Naive thymus-derived CD4-positive, alpha-beta T cell (primary cell): ENCODE measurements at regions of chr6 and their contacts with region 1.

Region 1: DNA sequence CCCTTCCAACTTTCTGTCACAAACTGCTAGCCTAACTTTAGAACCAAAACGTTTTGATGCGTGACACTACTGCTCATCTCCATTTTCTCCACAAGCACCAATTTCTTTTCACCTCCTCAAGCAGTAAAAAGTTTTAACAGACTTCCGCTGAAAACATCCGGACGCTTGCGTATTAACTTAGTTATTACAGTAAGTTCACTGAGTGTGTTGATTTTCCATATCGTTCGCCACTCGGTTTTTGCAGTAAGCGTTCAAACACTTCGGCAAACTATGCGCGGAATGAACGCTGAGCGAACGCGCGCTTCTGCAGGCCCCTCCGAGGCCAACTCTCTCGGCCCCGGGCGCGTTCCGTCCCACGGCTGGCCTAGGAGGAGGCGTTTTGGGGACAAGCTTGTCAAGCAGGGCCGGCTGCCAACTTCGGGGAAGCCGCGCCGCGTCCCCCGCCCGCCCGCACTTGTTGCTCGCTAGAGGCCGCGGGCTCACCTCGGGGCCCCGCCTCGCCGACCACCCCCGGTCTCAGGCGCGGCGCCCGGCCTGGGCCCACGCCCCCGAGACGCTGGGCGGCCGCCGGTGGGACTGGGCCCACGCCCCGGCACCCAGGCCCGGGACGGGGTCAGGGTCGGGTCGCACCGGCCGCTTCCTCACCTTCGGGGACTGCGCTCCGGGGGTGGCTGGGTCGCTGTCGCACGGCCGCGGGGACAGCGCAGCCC is 945 bp downstream of the PHF10 start:
- DNase-seq: peak; percentile 59 to 86 (median 79)
- ATAC-seq: peak; percentile 49
- H3K4me3 ChIP-seq: peak overlapping the region; percentile 71
- H3K4me3 Mint-ChIP-seq: peak overlapping the region; percentile 87 to 97 (median 92)
- H3K27ac ChIP-seq: peak overlapping the region; percentile 95
- H3K27ac Mint-ChIP-seq: peak overlapping the region; percentile 95 to 98 (median 97)
- H3K4me1 ChIP-seq: peaks cover 13 to 26% of the 10 kb centered on the region in 2 donors
- H3K4me1 Mint-ChIP-seq: peaks cover 18 to 67% (median 55%) of the 10 kb centered on the region in 7 donors
- H3K27me3 ChIP-seq: no peaks in the 10 kb centered on the region
- H3K27me3 Mint-ChIP-seq: peaks cover 0 to 8% (median 0%) of the 10 kb centered on the region in 5 donors

Region 2: GRCh38 chr6:167826230-167826895 is 1897.0 kb before region 1 on chr6:
- CTCF ChIA-PET with region 1: no interaction called
- POLR2A ChIA-PET with region 1: no interaction called
- intact Hi-C with region 1: loop called in 1 of 2 experiments (anchors 5 kb)
- DNase-seq: peak; percentile 11 to 73 (median 55)
- ATAC-seq: peak; percentile 97
- H3K4me3 ChIP-seq: peak overlapping the region; percentile 66
- H3K4me3 Mint-ChIP-seq: peak overlapping the region; percentile 83 to 91 (median 85)
- H3K27ac ChIP-seq: no peak overlapping the region
- H3K27ac Mint-ChIP-seq: peak overlapping the region in 4 of 9 donors; percentile 44 to 69 (median 60)
- H3K4me1 ChIP-seq: peaks cover 0 to 14% of the 10 kb centered on the region in 2 donors
- H3K4me1 Mint-ChIP-seq: peaks cover 5 to 43% (median 26%) of the 10 kb centered on the region in 7 donors
- H3K27me3 ChIP-seq: peaks cover 0 to 27% of the 10 kb centered on the region in 2 donors
- H3K27me3 Mint-ChIP-seq: peaks cover 49 to 81% (median 69%) of the 10 kb centered on the region in 5 donors

Region 3: DNA sequence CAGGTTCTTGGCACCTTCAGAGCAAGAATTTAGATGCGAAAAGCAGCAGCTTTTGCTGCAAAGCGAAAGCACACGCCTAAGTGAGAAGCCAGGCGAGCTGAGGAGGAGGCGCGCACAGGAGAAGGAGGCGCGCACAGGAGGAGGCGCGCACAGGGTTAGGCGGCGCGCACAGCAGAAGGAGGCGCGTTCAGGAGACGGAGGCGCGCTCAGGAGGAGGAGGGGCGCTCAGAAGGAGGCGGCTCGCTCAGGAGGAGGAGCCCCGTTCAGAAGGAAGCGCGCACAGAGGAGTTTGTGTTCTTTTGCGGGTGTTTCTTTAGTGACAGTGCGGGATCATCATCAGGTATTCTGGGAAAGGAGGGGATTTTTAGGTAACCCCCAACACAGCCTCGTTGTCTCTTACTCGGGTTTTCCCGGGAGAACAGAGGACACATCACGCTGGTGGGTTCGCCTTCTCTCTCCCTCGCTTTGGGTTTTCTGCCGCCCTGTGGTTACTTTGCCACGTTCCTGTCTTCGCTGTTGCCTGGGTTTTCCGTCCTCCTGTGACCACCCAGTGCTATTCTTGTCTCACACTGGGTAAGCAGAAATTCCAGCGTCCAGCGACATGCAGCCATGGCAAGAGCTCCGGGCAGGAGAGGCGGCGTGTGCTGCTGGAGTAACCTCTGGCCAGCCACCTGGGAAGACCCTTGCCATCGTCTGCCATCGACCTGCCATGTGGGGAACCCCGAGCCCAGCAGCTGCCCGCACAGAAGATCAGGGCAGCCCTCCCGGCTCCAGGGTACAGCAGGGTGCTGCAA is 68.6 kb before region 1 on chr6:
- CTCF ChIA-PET with region 1: no interaction called
- POLR2A ChIA-PET with region 1: interaction called, 7 read pairs
- intact Hi-C with region 1: loop called (anchors 1 kb)
- DNase-seq: peak; percentile 59 to 86 (median 73)
- ATAC-seq: peak; percentile 99
- H3K4me3 ChIP-seq: peak overlapping the region; percentile 64
- H3K4me3 Mint-ChIP-seq: peak overlapping the region; percentile 86 to 95 (median 92)
- H3K27ac ChIP-seq: peak overlapping the region; percentile 72
- H3K27ac Mint-ChIP-seq: peak overlapping the region; percentile 71 to 95 (median 89)
- H3K4me1 ChIP-seq: no peaks in the 10 kb centered on the region
- H3K4me1 Mint-ChIP-seq: peaks cover 0 to 19% (median 15%) of the 10 kb centered on the region in 7 donors
- H3K27me3 ChIP-seq: no peaks in the 10 kb centered on the region
- H3K27me3 Mint-ChIP-seq: no peaks in the 10 kb centered on the region

Region 4: DNA sequence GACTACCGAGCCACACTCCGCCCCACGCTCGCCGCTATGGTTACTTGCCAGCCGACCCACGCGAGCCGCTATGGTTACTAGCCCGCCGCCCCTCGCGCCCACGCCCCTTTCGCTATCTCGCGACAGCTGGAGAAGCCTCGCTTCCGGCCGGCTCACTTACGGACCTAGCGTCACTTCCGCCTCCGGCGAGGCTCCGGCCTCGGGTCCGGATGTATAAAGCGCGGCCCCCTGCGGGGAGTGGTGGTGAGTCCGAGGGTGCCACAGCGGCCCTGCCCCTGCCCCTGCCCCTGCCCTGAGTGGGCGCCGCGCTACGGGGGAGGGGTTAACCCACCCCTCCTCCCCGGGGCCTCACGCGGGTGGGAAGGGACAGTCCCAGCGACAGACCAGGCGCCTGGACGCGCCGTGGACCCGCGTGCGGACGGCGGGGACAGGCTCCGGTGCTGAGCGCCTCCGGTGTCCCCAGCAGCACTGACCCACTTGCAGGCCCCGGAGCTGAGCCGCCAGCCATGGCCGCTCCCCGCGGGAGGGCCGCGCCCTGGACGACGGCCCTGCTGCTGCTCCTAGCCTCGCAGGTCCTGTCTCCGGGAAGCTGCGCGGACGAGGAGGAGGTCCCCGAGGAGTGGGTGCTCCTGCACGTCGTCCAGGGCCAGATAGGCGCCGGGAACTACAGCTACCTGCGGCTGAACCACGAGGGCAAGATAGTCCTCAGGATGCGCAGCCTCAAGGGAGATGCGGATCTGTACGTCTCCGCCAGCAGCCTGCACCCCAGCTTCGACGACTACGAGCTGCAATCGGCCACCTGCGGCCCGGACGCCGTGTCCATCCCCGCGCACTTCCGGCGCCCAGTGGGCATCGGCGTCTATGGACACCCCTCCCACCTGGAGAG is 21.2 kb before region 1 on chr6 and contains the starts of genes C6orf120 and WDR27:
- CTCF ChIA-PET with region 1: interaction called, 6 read pairs
- POLR2A ChIA-PET with region 1: interaction called, 307 read pairs
- intact Hi-C with region 1: loop called (anchors 1 kb)
- DNase-seq: peak; percentile 91 to 98 (median 94)
- ATAC-seq: peak; percentile 93
- H3K4me3 ChIP-seq: peak within 1 kb of the TSS; percentile 95
- H3K4me3 Mint-ChIP-seq: peak within 1 kb of the TSS; percentile 89 to 94 (median 92)
- H3K27ac ChIP-seq: peak within 1 kb of the TSS; percentile 98
- H3K27ac Mint-ChIP-seq: peak within 1 kb of the TSS; percentile 88 to 96 (median 93)
- H3K4me1 ChIP-seq: peaks cover 22 to 36% of the 10 kb centered on the region in 2 donors
- H3K4me1 Mint-ChIP-seq: peaks cover 28 to 66% (median 55%) of the 10 kb centered on the region in 7 donors
- H3K27me3 ChIP-seq: no peaks in the 10 kb centered on the region
- H3K27me3 Mint-ChIP-seq: no peaks in the 10 kb centered on the region
- total RNA-seq, gene C6orf120: 16.0 to 38.1 (median 19.3) TPM
- total RNA-seq, gene WDR27: 22.7 to 89.0 (median 41.4) TPM

Region 5: DNA sequence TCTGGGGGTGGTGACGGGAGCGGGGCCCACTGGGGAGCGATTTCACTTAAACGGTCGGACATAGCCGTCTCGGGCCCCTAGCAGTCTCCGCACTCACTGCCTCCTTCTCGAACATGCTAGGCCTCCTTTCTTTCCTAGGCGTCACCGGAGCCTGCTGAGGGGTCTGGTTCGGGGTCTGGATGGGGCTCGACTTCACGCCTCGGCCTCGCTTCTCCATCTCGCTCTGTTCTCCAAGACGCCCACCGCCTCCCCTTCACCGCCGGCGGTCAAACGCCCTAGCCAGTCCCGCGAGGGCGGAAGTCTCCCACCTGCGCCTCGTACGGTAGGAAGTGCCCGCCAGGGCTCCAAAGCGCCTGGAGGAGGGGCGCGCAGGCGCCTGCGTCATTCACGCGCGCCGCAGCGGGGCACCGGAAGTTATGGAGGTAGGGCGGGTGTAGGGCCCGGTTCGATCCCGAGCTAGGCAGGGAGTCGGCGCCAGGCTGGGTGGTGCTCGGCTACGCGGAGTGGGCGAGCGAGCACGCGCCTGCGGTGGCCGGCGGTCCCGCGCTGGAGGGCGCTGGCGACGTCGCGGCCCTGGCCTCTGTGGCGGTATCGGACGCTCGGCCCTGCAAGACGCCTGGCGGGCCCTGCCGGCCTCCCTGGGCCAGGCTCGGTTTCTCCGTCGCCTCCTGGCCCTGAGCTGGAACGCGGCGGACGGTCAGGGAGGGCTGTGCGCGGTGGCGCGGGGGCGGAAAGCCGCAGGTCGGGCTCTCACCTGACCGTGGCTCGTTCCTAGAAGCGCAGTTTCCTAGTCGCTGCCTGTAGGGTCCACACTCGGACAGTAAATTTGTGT is 28.1 kb after region 1 on chr6 and contains the starts of genes DYNLT2 and ERMARD:
- CTCF ChIA-PET with region 1: no interaction called
- POLR2A ChIA-PET with region 1: interaction called, 97 read pairs
- intact Hi-C with region 1: loop called (anchors 1 kb)
- DNase-seq: peak; percentile 89 to 97 (median 94)
- ATAC-seq: peak; percentile 98
- H3K4me3 ChIP-seq: peak within 1 kb of the TSS; percentile 84
- H3K4me3 Mint-ChIP-seq: peak within 1 kb of the TSS; percentile 92 to 100 (median 98)
- H3K27ac ChIP-seq: peak within 1 kb of the TSS; percentile 92
- H3K27ac Mint-ChIP-seq: peak within 1 kb of the TSS; percentile 96 to 100 (median 100)
- H3K4me1 ChIP-seq: peaks cover 17% of the 10 kb centered on the region in 2 donors
- H3K4me1 Mint-ChIP-seq: peaks cover 21 to 43% (median 37%) of the 10 kb centered on the region in 7 donors
- H3K27me3 ChIP-seq: no peaks in the 10 kb centered on the region
- H3K27me3 Mint-ChIP-seq: peaks cover 0 to 4% (median 0%) of the 10 kb centered on the region in 5 donors
- total RNA-seq, gene DYNLT2: 2.5 to 4.7 (median 4.1) TPM
- total RNA-seq, gene ERMARD: 30.3 to 43.7 (median 35.7) TPM

Region 6: GRCh38 chr6:170554013-170554795 is 830.8 kb after region 1 on chr6 and contains the start of gene TBP:
- CTCF ChIA-PET with region 1: interaction called, 3 read pairs
- POLR2A ChIA-PET with region 1: interaction called, 14 read pairs
- intact Hi-C with region 1: loop called (anchors 1 kb)
- DNase-seq: peak; percentile 90 to 99 (median 97)
- ATAC-seq: peak; percentile 95
- H3K4me3 ChIP-seq: peak within 1 kb of the TSS; percentile 91
- H3K4me3 Mint-ChIP-seq: no peak within 1 kb of the TSS
- H3K27ac ChIP-seq: peak within 1 kb of the TSS; percentile 93
- H3K27ac Mint-ChIP-seq: no peak within 1 kb of the TSS
- H3K4me1 ChIP-seq: peaks cover 38% of the 10 kb centered on the region in 2 donors
- H3K4me1 Mint-ChIP-seq: peaks cover 16 to 46% (median 30%) of the 10 kb centered on the region in 7 donors
- H3K27me3 ChIP-seq: no peaks in the 10 kb centered on the region
- H3K27me3 Mint-ChIP-seq: no peaks in the 10 kb centered on the region
- total RNA-seq, gene TBP: 13.8 to 28.3 (median 23.9) TPM

Region 7: DNA sequence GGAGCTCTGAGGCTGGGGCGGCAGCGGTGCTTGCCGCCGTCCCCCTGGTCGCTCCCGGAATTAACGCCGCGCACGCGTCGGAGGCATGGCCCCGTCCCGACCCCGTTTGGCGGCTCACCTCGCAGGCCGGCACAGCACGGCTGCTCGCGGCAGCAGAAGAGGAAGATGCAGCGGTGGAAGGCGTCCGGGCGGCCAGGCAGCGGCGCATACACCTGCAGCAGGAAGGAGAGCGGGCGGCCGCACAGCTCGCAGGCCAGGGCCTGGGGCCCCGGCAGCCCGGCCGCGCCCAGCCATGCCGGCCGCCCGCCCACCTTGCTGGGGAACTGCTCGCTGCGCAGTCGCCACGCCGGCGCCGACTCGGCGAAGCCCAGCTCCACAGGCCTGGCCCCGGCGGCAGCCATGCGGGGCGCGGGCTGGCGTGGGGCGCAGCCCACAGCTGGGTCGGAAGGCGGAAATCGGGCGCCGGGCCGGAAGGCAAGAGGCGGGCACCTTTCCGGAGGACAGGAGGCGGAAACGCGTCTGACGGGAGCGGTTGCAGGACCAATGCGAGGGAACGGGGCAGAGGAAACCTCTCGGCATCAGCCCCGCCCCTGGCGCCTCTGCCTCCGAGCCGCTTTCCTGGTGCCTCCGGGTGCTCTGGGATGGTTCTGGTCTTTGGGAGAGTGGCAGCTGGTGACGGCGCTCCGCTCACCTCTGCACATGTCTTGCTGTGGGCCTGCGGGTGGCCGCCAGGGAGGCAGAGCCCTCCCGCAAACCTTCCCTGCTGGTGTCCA is 861.0 kb after region 1 on chr6 and contains the start of gene PDCD2:
- CTCF ChIA-PET with region 1: no interaction called
- POLR2A ChIA-PET with region 1: interaction called, 4 read pairs
- intact Hi-C with region 1: loop called in 1 of 2 experiments (anchors 1 kb)
- DNase-seq: peak; percentile 82 to 92 (median 91)
- ATAC-seq: peak; percentile 96
- H3K4me3 ChIP-seq: peak within 1 kb of the TSS; percentile 89
- H3K4me3 Mint-ChIP-seq: peak within 1 kb of the TSS; percentile 96 to 100 (median 97)
- H3K27ac ChIP-seq: peak within 1 kb of the TSS; percentile 88
- H3K27ac Mint-ChIP-seq: peak within 1 kb of the TSS; percentile 94 to 99 (median 96)
- H3K4me1 ChIP-seq: peaks cover 8 to 11% of the 10 kb centered on the region in 2 donors
- H3K4me1 Mint-ChIP-seq: peaks cover 14 to 42% (median 37%) of the 10 kb centered on the region in 7 donors
- H3K27me3 ChIP-seq: no peaks in the 10 kb centered on the region
- H3K27me3 Mint-ChIP-seq: peaks cover 0 to 4% (median 0%) of the 10 kb centered on the region in 5 donors
- total RNA-seq, gene PDCD2: 49.4 to 80.1 (median 76.1) TPM